ENCODE measurements at regions of chr18 and their contacts with region 1.

Region 1: GRCh38 chr18:13726232-13726971 is at the starts of genes FAM210A and RNMT:
- DNase-seq: peak; percentile 97
- ATAC-seq: peak; percentile 86
- H3K4me3 ChIP-seq: peak within 1 kb of the TSS; percentile 96
- H3K27ac ChIP-seq: peak within 1 kb of the TSS; percentile 75
- H3K4me1 ChIP-seq: peaks cover 26% of the 10 kb centered on the region; the same call in 1 of the 2 replicates
- H3K27me3 ChIP-seq: no peaks in the 10 kb centered on the region
- CTCF ChIP-seq: no peak
- total RNA-seq, gene FAM210A: 49.2 and 52.7 TPM in 2 replicates
- total RNA-seq, gene RNMT: 18.9 and 21.1 TPM in 2 replicates

Region 2: GRCh38 chr18:12990967-12991838 is 735.2 kb before region 1 on chr18 and contains the start of gene CEP192:
- CTCF ChIA-PET with region 1: no interaction called
- POLR2A ChIA-PET with region 1: no interaction called
- intact Hi-C with region 1: loop called (anchors 5 kb)
- DNase-seq: peak; percentile 98
- ATAC-seq: peak; percentile 88
- H3K4me3 ChIP-seq: peak within 1 kb of the TSS; percentile 94
- H3K27ac ChIP-seq: peak within 1 kb of the TSS; percentile 82
- H3K4me1 ChIP-seq: peaks cover 22% of the 10 kb centered on the region
- H3K27me3 ChIP-seq: no peaks in the 10 kb centered on the region
- CTCF ChIP-seq: peak; percentile 18; the same call in 1 of the 2 replicates
- total RNA-seq, gene CEP192: 32.6 and 34.4 TPM in 2 replicates

Region 3: GRCh38 chr18:13003466-13003896 is 722.9 kb before region 1 on chr18:
- CTCF ChIA-PET with region 1: no interaction called
- POLR2A ChIA-PET with region 1: interaction called, 35 read pairs
- intact Hi-C with region 1: no loop called
- DNase-seq: peak; percentile 62
- ATAC-seq: peak; percentile 95
- H3K4me3 ChIP-seq: no peak overlapping the region
- H3K27ac ChIP-seq: no peak overlapping the region
- H3K4me1 ChIP-seq: 0 out of 2 replicates have a peak, but pooled peaks cover 2% of the 10 kb centered on the region
- H3K27me3 ChIP-seq: no peaks in the 10 kb centered on the region
- CTCF ChIP-seq: peak; percentile 70

Region 4: GRCh38 chr18:13672657-13673056 is 53.7 kb before region 1 on chr18:
- CTCF ChIA-PET with region 1: no interaction called
- POLR2A ChIA-PET with region 1: no interaction called
- intact Hi-C with region 1: loop called (anchors 10 kb)
- DNase-seq: peak; percentile 5
- ATAC-seq: no peak
- H3K4me3 ChIP-seq: no peak overlapping the region
- H3K27ac ChIP-seq: no peak overlapping the region
- H3K4me1 ChIP-seq: no peaks in the 10 kb centered on the region
- H3K27me3 ChIP-seq: no peaks in the 10 kb centered on the region
- CTCF ChIP-seq: no peak

Region 5: DNA sequence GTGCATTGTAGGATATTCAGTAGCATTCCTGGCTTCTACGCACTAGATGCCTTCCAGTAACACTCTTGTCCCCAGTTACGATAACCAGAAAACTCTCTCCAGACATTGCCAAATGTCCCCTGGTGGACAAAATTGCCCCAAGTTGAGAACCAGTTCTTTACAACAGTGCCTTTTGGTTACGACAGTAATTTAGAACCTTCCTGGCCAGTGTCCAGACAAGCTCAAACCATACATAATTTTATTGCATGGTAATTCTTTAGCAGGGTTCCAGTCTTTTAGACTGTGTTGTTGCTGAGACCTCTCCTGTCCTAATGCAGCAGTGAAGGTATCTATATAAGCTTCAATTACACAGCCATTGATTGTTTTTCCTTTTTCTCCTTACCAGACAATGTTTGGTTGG is 20.2 kb after region 1 on chr18:
- CTCF ChIA-PET with region 1: no interaction called
- POLR2A ChIA-PET with region 1: interaction called, 11 read pairs
- intact Hi-C with region 1: no loop called
- DNase-seq: no peak
- ATAC-seq: no peak
- H3K4me3 ChIP-seq: no peak overlapping the region
- H3K27ac ChIP-seq: no peak overlapping the region
- H3K4me1 ChIP-seq: no peaks in the 10 kb centered on the region
- H3K27me3 ChIP-seq: no peaks in the 10 kb centered on the region
- CTCF ChIP-seq: no peak

Measured in PC-3 (cell line).